ENCODE measurements at regions of chrX and their contacts with region 1.

Region 1: GRCh38 chrX:17527135-17527701 is 152.2 kb downstream of the NHS start:
- DNase-seq: peak in 1 of 2 donors; percentile 78
- ATAC-seq: peak; percentile 49
- H3K4me3 ChIP-seq: no peak overlapping the region
- H3K27ac ChIP-seq: peak overlapping the region in 1 of 2 donors; percentile 19
- H3K4me1 ChIP-seq: peaks cover 0 to 3% of the 10 kb centered on the region in 2 donors
- H3K27me3 ChIP-seq: no peaks in the 10 kb centered on the region

Region 2: DNA sequence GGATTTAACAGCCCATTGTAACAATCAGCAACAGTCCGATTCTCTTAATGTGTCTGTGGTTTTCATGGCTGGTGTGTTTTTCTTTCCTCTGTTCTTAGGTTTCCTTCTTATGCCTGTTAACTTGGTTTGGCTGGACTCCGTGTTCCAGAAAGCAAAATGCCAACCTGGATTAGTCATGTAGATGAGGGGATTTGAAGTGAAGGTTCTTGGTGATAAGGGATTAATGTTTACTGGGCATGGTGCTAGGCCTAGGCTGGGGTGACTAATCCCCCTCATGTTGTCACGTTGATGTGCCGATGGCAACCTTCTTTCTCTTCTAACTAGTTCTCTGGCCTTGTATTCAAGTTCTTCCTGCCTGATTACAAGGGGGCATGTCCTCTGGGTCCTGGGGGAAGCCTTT is 494.9 kb before region 1 on chrX:
- intact Hi-C with region 1: loop called in 1 of 2 experiments (anchors 5 kb)
- DNase-seq: peak in 1 of 2 donors; percentile 50
- ATAC-seq: peak; percentile 73
- H3K4me3 ChIP-seq: no peak overlapping the region
- H3K27ac ChIP-seq: peak overlapping the region; percentile 30 to 95
- H3K4me1 ChIP-seq: peaks cover 0 to 4% of the 10 kb centered on the region in 2 donors
- H3K27me3 ChIP-seq: no peaks in the 10 kb centered on the region

Region 3: GRCh38 chrX:17374619-17375366 is 152.4 kb before region 1 on chrX and contains the start of gene NHS:
- intact Hi-C with region 1: loop called (anchors 2 to 5 kb)
- DNase-seq: peak; percentile 81 to 90
- ATAC-seq: peak; percentile 86
- H3K4me3 ChIP-seq: peak within 1 kb of the TSS; percentile 56 to 66
- H3K27ac ChIP-seq: peak within 1 kb of the TSS in 1 of 2 donors; percentile 63
- H3K4me1 ChIP-seq: no peaks in the 10 kb centered on the region
- H3K27me3 ChIP-seq: no peaks in the 10 kb centered on the region
- total RNA-seq, gene NHS: 19.1 to 28.2 TPM

Measured in aorta (tissue), 5 donors.